Activated CD8-positive, alpha-beta T cell treated with anti-CD3 and anti-CD28 coated beads, Interleukin-2, amount 10 ng/mL, durations not matched to agents 7 days and 5 days (primary cell): ENCODE measurements at regions of chr6 and their contacts with region 1.

Region 1: GRCh38 chr6:35452186-35453090 is at the start of gene FANCE:
- DNase-seq: peak; percentile 93
- ATAC-seq: peak; percentile 84
- H3K4me3 Mint-ChIP-seq: peak within 1 kb of the TSS; percentile 83
- H3K27ac Mint-ChIP-seq: peak within 1 kb of the TSS; percentile 75
- H3K4me1 Mint-ChIP-seq: peaks cover 50% of the 10 kb centered on the region
- H3K27me3 Mint-ChIP-seq: peaks cover 4% of the 10 kb centered on the region
- total RNA-seq, gene FANCE: 20.4 to 21.9 TPM

Region 2: DNA sequence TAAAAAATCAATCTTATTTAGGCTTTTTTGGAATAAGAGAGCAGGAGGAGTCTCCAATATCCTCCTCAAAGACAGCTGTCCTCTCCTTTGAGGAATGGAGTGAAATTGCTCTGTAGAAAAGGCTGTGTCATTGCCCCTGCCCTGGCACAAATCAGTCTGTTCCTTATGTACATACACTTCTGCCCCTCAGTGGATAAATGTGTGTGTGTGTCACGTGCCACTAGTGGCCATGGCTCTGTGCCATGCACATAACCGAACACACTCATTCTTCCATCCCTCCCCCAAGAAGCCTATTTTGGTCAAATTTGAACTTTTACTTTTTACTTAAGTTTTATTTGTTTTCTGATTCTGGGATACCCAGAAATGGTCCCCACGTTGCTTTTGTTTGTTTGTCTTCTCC is 514.2 kb before region 1 on chr6:
- CTCF ChIA-PET with region 1: no interaction called
- POLR2A ChIA-PET with region 1: no interaction called
- DNase-seq: no peak
- ATAC-seq: no peak
- H3K4me3 Mint-ChIP-seq: no peak overlapping the region
- H3K27ac Mint-ChIP-seq: no peak overlapping the region
- H3K4me1 Mint-ChIP-seq: peaks cover 8% of the 10 kb centered on the region
- H3K27me3 Mint-ChIP-seq: peaks cover 2% of the 10 kb centered on the region

Region 3: GRCh38 chr6:35327349-35328027 is 125.0 kb before region 1 on chr6:
- CTCF ChIA-PET with region 1: interaction called, 46 read pairs
- POLR2A ChIA-PET with region 1: interaction called, 3 read pairs
- DNase-seq: peak; percentile 84
- ATAC-seq: peak; percentile 95
- H3K4me3 Mint-ChIP-seq: no peak overlapping the region
- H3K27ac Mint-ChIP-seq: peak overlapping the region; percentile 77
- H3K4me1 Mint-ChIP-seq: peaks cover 23% of the 10 kb centered on the region
- H3K27me3 Mint-ChIP-seq: no peaks in the 10 kb centered on the region

Region 4: GRCh38 chr6:35342258-35343091 is 110.0 kb before region 1 on chr6 and contains the start of gene PPARD:
- CTCF ChIA-PET with region 1: interaction called, 192 read pairs
- POLR2A ChIA-PET with region 1: interaction called, 11 read pairs
- DNase-seq: peak; percentile 98
- ATAC-seq: peak; percentile 99
- H3K4me3 Mint-ChIP-seq: peak within 1 kb of the TSS; percentile 90
- H3K27ac Mint-ChIP-seq: peak within 1 kb of the TSS; percentile 92
- H3K4me1 Mint-ChIP-seq: peaks cover 51% of the 10 kb centered on the region
- H3K27me3 Mint-ChIP-seq: peaks cover 4% of the 10 kb centered on the region
- total RNA-seq, gene PPARD: 36.3 to 36.7 TPM

Region 5: GRCh38 chr6:35391240-35391968 is 61.0 kb before region 1 on chr6:
- CTCF ChIA-PET with region 1: interaction called, 10 read pairs
- POLR2A ChIA-PET with region 1: no interaction called
- DNase-seq: no peak
- ATAC-seq: no peak
- H3K4me3 Mint-ChIP-seq: no peak overlapping the region
- H3K27ac Mint-ChIP-seq: peak overlapping the region; percentile 61
- H3K4me1 Mint-ChIP-seq: peaks cover 63% of the 10 kb centered on the region
- H3K27me3 Mint-ChIP-seq: no peaks in the 10 kb centered on the region

Region 6: GRCh38 chr6:35435074-35435837 is 17.2 kb before region 1 on chr6:
- CTCF ChIA-PET with region 1: interaction called, 12 read pairs
- POLR2A ChIA-PET with region 1: no interaction called
- DNase-seq: no peak
- ATAC-seq: no peak
- H3K4me3 Mint-ChIP-seq: no peak overlapping the region
- H3K27ac Mint-ChIP-seq: peak overlapping the region; percentile 25
- H3K4me1 Mint-ChIP-seq: no peaks in the 10 kb centered on the region
- H3K27me3 Mint-ChIP-seq: no peaks in the 10 kb centered on the region

Region 7: DNA sequence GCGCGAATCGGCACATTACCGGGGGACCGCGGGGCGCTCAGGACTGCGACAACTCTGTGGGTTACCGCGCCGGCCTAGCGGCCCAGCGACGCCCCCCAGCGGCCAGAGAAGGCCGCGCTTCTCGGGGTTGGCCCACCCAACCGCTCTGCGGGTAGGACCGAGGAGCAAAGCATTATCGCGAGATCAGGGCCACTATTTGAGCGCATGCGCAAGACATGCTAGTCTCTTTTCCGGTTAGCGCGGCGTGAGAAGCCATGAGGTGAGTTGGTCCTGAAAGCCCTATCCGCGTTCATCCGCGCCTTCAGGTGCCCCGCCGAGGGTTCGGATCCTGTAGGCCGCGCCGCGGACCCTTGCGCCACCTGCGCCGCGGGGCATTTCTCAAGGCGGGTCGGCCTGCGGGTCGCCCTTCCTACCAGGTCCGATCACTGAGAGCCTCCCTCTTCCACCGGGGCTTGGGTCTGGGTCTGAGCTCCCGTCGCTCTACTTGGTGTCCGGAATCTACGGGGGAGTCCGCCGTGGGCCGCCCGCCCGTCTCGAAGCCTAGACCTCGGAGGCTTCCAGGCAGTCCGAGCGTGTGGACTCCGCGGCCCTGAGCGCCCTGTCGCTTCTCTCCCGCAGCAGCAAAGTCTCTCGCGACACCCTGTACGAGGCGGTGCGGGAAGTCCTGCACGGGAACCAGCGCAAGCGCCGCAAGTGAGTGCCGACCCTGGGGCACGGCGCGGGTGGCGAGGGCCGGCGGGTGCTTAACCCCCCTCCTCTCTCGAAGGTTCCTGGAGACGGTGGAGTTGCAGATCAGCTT is 15.9 kb after region 1 on chr6 and contains the start of gene RPL10A:
- CTCF ChIA-PET with region 1: interaction called, 30 read pairs
- POLR2A ChIA-PET with region 1: interaction called, 5 read pairs
- DNase-seq: peak; percentile 98
- ATAC-seq: peak; percentile 89
- H3K4me3 Mint-ChIP-seq: peak within 1 kb of the TSS; percentile 83
- H3K27ac Mint-ChIP-seq: peak within 1 kb of the TSS; percentile 99
- H3K4me1 Mint-ChIP-seq: peaks cover 39% of the 10 kb centered on the region
- H3K27me3 Mint-ChIP-seq: no peaks in the 10 kb centered on the region
- total RNA-seq, gene RPL10A: 1,398 to 1,443 TPM

Region 8: GRCh38 chr6:35804996-35805736 is 352.7 kb after region 1 on chr6 and contains the start of gene LHFPL5:
- CTCF ChIA-PET with region 1: no interaction called
- POLR2A ChIA-PET with region 1: no interaction called
- DNase-seq: peak; percentile 62
- ATAC-seq: peak; percentile 95
- H3K4me3 Mint-ChIP-seq: no peak within 1 kb of the TSS
- H3K27ac Mint-ChIP-seq: no peak within 1 kb of the TSS
- H3K4me1 Mint-ChIP-seq: peaks cover 2% of the 10 kb centered on the region
- H3K27me3 Mint-ChIP-seq: peaks cover 2% of the 10 kb centered on the region
- total RNA-seq, gene LHFPL5: not detected